Mammary epithelial cell (primary cell): ENCODE measurements at regions of chr4 and their contacts with region 1.

Region 1: GRCh38 chr4:65007841-65008439 is 598.7 kb upstream of the TECRL start:
- DNase-seq: peak; percentile 23
- H3K4me3 ChIP-seq: no peak overlapping the region
- H3K27ac ChIP-seq: no peak overlapping the region
- H3K4me1 ChIP-seq: no peaks in the 10 kb centered on the region
- H3K27me3 ChIP-seq: no peaks in the 10 kb centered on the region
- CTCF ChIP-seq: peak; percentile 55 to 66

Region 2: GRCh38 chr4:64911846-64912245 is 96.1 kb before region 1 on chr4:
- CTCF ChIA-PET with region 1: no interaction called
- dilution Hi-C with region 1: no loop called
- in situ Hi-C with region 1: no loop called
- intact Hi-C with region 1: no loop called
- DNase-seq: no peak
- H3K4me3 ChIP-seq: no peak overlapping the region
- H3K27ac ChIP-seq: no peak overlapping the region
- H3K4me1 ChIP-seq: no peaks in the 10 kb centered on the region
- H3K27me3 ChIP-seq: no peaks in the 10 kb centered on the region
- CTCF ChIP-seq: no peak

Region 3: GRCh38 chr4:66688674-66689073 is 1680.7 kb after region 1 on chr4:
- CTCF ChIA-PET with region 1: no interaction called
- dilution Hi-C with region 1: no loop called
- in situ Hi-C with region 1: loop called in 1 of 2 experiments (anchors 25 kb)
- intact Hi-C with region 1: no loop called
- DNase-seq: peak; percentile 6
- H3K4me3 ChIP-seq: no peak overlapping the region
- H3K27ac ChIP-seq: no peak overlapping the region
- H3K4me1 ChIP-seq: no peaks in the 10 kb centered on the region
- H3K27me3 ChIP-seq: no peaks in the 10 kb centered on the region
- CTCF ChIP-seq: peak; percentile 22 to 50